Gastrocnemius medialis (tissue), 4 donors: ENCODE measurements at regions of chr6 and their contacts with region 1.

Region 1: GRCh38 chr6:32952817-32953739 is at the start of gene HLA-DMA:
- DNase-seq: peak; percentile 81 to 94
- ATAC-seq: peak; percentile 99 to 100
- H3K4me3 ChIP-seq: peak within 1 kb of the TSS; percentile 3 to 44 (median 22)
- H3K27ac ChIP-seq: peak within 1 kb of the TSS; percentile 68 to 85 (median 75)
- H3K4me1 ChIP-seq: peaks cover 6 to 8% of the 10 kb centered on the region in 2 donors
- H3K27me3 ChIP-seq: no peaks in the 10 kb centered on the region
- CTCF ChIP-seq: peak; percentile 81 to 87 (median 84)
- POLR2A ChIP-seq: peak; percentile 48 to 72
- total RNA-seq, gene HLA-DMA: 3.6 to 22.8 (median 6.3) TPM

Region 2: GRCh38 chr6:32885698-32886286 is 67.3 kb before region 1 on chr6:
- in situ Hi-C with region 1: no loop called
- intact Hi-C with region 1: loop called (anchors 1 kb)
- DNase-seq: no peak
- ATAC-seq: peak; percentile 43 to 51
- H3K4me3 ChIP-seq: no peak overlapping the region
- H3K27ac ChIP-seq: no peak overlapping the region
- H3K4me1 ChIP-seq: peaks cover 5 to 9% of the 10 kb centered on the region in 2 donors
- H3K27me3 ChIP-seq: no peaks in the 10 kb centered on the region
- CTCF ChIP-seq: peak; percentile 49 to 76 (median 65)
- POLR2A ChIP-seq: no peak

Region 3: GRCh38 chr6:32894080-32895005 is 58.7 kb before region 1 on chr6:
- in situ Hi-C with region 1: no loop called
- intact Hi-C with region 1: loop called (anchors 2 kb)
- DNase-seq: peak; percentile 85 to 91
- ATAC-seq: peak; percentile 98 to 99
- H3K4me3 ChIP-seq: peak overlapping the region; percentile 81 to 85 (median 82)
- H3K27ac ChIP-seq: peak overlapping the region; percentile 83 to 87 (median 86)
- H3K4me1 ChIP-seq: peaks cover 9 to 13% of the 10 kb centered on the region in 2 donors
- H3K27me3 ChIP-seq: no peaks in the 10 kb centered on the region
- CTCF ChIP-seq: no peak
- POLR2A ChIP-seq: peak; percentile 55 to 76

Region 4: DNA sequence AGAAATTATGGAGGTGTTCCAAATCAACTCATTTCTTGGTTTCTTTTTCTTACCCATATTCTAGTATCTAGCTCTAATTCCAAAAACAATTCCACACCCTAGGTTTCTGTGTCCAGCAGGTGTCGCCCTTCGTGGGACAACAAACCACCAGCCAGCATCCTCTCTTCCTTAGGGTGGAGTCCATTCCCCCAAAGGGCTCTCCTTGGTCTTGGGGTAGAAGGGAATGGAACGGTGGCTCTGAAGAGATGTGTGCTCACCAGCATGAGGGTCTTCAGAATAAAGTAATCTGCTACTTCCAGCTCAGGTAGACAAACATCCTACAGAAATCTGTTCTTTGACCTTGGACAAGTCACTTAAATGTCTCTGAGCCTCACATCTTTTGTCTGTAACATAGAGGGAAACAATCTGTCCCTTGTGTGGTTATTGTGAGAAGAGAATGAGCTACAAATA is 19.4 kb before region 1 on chr6:
- in situ Hi-C with region 1: no loop called
- intact Hi-C with region 1: loop called (anchors 1 kb)
- DNase-seq: peak; percentile 33 to 70
- ATAC-seq: peak; percentile 54 to 77
- H3K4me3 ChIP-seq: no peak overlapping the region
- H3K27ac ChIP-seq: no peak overlapping the region
- H3K4me1 ChIP-seq: no peaks in the 10 kb centered on the region
- H3K27me3 ChIP-seq: no peaks in the 10 kb centered on the region
- CTCF ChIP-seq: peak; percentile 74 to 88 (median 86)
- POLR2A ChIP-seq: no peak